ENCODE measurements at regions of chr6 and their contacts with region 1.

Region 1: GRCh38 chr6:37169496-37170272 is at the start of gene PIM1:
- DNase-seq: peak; percentile 88
- ATAC-seq: peak; percentile 84
- H3K4me3 Mint-ChIP-seq: peak within 1 kb of the TSS; percentile 95
- H3K27ac Mint-ChIP-seq: peak within 1 kb of the TSS; percentile 96
- H3K4me1 Mint-ChIP-seq: peaks cover 47% of the 10 kb centered on the region
- H3K27me3 Mint-ChIP-seq: no peaks in the 10 kb centered on the region
- CTCF ChIP-seq: no peak
- total RNA-seq, gene PIM1: 272 and 283 TPM in 2 replicates

Region 2: DNA sequence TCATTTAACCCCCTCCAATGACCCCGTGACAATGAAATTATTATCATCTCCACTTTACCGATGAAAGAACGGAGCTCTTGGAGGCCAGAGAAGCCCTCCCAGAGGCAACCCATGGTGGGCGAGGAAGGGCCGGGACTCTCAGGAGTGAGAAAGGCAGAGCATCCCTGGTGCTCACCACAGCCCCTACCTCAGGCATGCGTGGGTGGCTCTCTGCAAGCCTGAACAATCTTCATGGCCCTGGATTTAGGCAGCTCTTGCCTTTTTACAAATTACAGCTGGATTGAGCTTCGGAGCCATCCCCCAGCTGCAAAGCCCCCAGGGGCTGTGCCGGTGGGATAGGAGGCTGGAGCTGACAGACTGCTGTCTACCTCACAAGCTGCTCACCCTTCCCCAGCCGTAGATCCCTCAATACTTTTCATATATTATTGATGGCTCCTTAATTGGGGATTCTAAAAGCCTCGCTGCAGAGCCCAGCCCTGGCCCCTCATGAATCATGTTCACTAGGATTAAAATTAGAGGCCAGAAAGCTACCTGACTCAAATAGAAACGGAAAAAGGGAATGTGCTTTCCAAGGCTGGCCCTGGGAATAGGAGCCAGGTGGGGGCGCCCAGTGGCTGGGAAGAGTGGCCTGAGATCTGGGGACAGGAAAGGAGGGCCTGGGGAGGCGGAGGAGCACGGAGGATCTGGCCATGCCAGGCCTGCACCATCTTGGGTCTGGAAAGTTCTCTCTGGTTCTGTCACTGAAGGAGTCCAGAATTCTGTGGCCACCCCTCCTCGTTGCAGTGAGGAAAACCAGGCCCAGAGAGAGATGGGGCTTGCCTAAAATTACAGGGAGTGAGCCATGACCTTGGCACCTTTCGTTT is 359.5 kb before region 1 on chr6:
- CTCF ChIA-PET with region 1: no interaction called
- POLR2A ChIA-PET with region 1: no interaction called
- intact Hi-C with region 1: no loop called
- DNase-seq: no peak
- ATAC-seq: no peak
- H3K4me3 Mint-ChIP-seq: no peak overlapping the region
- H3K27ac Mint-ChIP-seq: no peak overlapping the region
- H3K4me1 Mint-ChIP-seq: no peaks in the 10 kb centered on the region
- H3K27me3 Mint-ChIP-seq: peaks cover 17% of the 10 kb centered on the region
- CTCF ChIP-seq: no peak

Region 3: DNA sequence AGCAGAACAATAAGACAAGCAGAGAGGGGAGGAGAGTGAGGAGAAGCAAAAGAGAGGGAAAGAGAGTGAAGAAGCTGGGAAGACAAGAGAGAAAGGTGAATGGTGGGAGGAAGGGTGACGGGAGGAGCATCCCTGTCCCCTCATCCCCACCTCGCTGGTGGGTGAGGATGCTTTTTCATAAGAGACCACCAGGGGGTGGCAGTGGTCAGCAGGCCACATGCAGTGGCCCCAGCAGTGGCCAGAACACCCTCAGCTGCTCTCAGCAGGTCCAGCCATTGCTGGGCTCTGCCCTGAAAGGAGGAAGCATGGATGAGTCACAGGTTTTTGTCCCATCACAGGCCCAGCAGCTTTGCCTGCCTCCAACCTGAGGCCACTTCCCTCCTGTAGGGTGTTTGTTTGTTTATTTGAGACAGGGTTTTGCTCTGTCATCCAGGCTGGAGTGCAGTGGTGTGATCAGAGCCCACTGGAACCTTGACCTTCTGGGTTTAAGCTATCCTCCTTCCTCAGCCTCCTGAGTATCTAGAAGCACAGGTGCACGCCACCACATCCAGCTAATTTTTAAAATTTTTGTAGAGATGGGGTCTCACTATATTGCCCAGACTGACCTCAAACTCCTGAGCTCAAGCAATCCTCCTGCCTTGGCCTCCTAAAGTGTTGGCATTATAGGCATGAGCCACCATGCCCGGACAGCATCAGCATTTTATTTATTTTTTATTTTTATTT is 140.3 kb before region 1 on chr6:
- CTCF ChIA-PET with region 1: interaction called, 65 read pairs
- POLR2A ChIA-PET with region 1: interaction called, 438 read pairs
- intact Hi-C with region 1: loop called (anchors 1 kb)
- DNase-seq: no peak
- ATAC-seq: peak; percentile 63
- H3K4me3 Mint-ChIP-seq: no peak overlapping the region
- H3K27ac Mint-ChIP-seq: peak overlapping the region; percentile 68
- H3K4me1 Mint-ChIP-seq: peaks cover 50% of the 10 kb centered on the region
- H3K27me3 Mint-ChIP-seq: no peaks in the 10 kb centered on the region
- CTCF ChIP-seq: no peak

Region 4: DNA sequence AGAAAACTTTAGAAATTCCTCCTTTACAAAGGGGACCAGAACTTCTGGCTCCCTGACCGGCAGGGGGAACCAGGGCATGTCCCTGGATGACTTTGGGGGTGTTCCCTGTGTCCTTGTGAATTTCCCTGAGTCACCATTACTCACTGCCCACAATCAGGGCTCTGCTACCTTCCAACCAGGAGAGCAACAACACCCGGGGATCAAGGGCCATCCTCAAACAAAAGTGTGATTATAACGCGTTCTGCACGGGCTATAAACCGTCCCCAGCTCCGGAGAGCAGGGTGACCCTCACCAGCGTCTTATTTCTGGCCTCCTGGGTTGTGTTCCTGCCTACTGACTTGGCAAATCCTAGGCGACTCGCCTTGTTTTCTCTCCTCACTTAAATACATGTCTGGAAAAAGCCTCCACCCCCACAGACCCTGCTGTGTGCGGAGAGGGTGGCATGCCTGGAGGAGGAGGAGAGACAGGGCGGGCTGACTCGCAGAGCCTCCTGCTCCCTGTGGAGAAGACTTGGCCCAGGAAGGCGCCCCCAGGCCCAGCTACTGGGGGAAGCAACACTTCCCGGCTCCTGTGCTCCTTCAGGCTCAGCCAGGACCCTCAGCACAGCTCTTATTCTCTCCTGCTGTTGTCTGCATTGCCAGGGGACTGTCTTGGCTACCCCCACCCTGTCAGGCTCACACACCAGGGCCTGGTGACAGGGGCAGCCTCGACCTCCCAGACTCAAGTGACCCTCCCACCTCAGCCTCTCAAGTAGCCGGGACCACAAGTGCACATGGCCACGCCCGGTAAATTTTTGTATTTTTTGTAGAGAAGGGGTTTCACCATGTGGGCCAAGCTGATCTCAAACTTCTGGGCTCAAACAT is 110.1 kb before region 1 on chr6:
- CTCF ChIA-PET with region 1: interaction called, 289 read pairs
- POLR2A ChIA-PET with region 1: interaction called, 956 read pairs
- intact Hi-C with region 1: no loop called
- DNase-seq: no peak
- ATAC-seq: no peak
- H3K4me3 Mint-ChIP-seq: no peak overlapping the region
- H3K27ac Mint-ChIP-seq: no peak overlapping the region
- H3K4me1 Mint-ChIP-seq: peaks cover 4% of the 10 kb centered on the region
- H3K27me3 Mint-ChIP-seq: peaks cover under 1% of the 10 kb centered on the region
- CTCF ChIP-seq: no peak

Region 5: GRCh38 chr6:37155394-37156312 is 14.0 kb before region 1 on chr6:
- CTCF ChIA-PET with region 1: interaction called, 11 read pairs
- POLR2A ChIA-PET with region 1: interaction called, 443 read pairs
- intact Hi-C with region 1: loop called (anchors 1 kb)
- DNase-seq: peak; percentile 66
- ATAC-seq: peak; percentile 85
- H3K4me3 Mint-ChIP-seq: peak overlapping the region; percentile 59
- H3K27ac Mint-ChIP-seq: peak overlapping the region; percentile 97
- H3K4me1 Mint-ChIP-seq: peaks cover 65% of the 10 kb centered on the region
- H3K27me3 Mint-ChIP-seq: no peaks in the 10 kb centered on the region
- CTCF ChIP-seq: no peak

Region 6: DNA sequence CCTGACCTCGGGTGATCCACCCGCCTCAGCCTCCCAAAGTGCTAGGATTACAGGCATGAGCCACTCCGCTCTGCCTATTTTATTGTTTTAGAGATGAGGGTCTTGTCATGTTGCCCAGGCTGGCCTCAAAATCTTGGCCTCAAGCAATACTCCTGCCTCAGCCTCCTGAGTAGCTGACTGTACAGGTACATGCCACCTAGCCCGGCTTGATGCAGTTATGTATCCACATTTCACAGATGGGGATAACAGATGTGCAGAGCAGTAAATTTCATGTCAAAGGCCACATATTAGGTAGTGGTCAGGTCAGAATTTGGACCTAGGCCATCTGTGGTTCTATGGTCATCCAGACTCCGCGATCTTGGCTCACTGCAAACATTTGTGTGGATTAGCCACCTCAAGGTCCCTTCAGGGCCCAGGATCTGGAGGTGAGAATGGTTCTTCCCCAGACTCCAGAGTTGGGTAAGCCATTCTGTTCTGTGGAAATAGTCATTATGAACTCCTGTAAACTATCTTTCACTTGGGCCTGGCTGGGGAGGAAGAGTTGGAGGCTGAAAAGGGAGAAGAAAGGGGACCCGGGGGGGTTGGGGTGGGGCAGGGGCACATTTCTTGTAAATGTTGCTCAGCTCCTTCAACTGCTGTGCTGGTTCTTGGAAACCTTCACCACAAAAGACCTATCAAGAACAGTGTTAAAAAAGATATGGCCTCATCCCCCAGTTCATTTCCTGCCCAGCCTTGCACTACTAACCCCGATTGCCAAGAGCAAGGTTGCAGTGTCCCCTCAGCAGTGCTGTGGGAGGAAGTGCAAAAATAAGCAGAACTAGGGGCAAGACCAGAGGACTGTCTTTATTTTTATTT is 13.3 kb after region 1 on chr6:
- CTCF ChIA-PET with region 1: no interaction called
- POLR2A ChIA-PET with region 1: interaction called, 26 read pairs
- intact Hi-C with region 1: no loop called
- DNase-seq: no peak
- ATAC-seq: peak; percentile 96
- H3K4me3 Mint-ChIP-seq: peak overlapping the region; percentile 29
- H3K27ac Mint-ChIP-seq: peak overlapping the region; percentile 71
- H3K4me1 Mint-ChIP-seq: peaks cover 27% of the 10 kb centered on the region
- H3K27me3 Mint-ChIP-seq: no peaks in the 10 kb centered on the region
- CTCF ChIP-seq: no peak

Region 7: GRCh38 chr6:37207903-37208456 is 38.3 kb after region 1 on chr6:
- CTCF ChIA-PET with region 1: interaction called, 114 read pairs
- POLR2A ChIA-PET with region 1: interaction called, 14 read pairs
- intact Hi-C with region 1: loop called (anchors 1 kb)
- DNase-seq: peak; percentile 79
- ATAC-seq: peak; percentile 97
- H3K4me3 Mint-ChIP-seq: no peak overlapping the region
- H3K27ac Mint-ChIP-seq: peak overlapping the region; percentile 5
- H3K4me1 Mint-ChIP-seq: peaks cover 20% of the 10 kb centered on the region
- H3K27me3 Mint-ChIP-seq: no peaks in the 10 kb centered on the region
- CTCF ChIP-seq: no peak